Endothelial cell of umbilical vein (primary cell): ENCODE measurements at regions of chr5 and their contacts with region 1.

Region 1: GRCh38 chr5:59673438-59674058 is 220.0 kb downstream of the PDE4D start:
- DNase-seq: peak; percentile 66
- H3K4me3 ChIP-seq: no peak overlapping the region
- H3K27ac ChIP-seq: no peak overlapping the region
- H3K4me1 ChIP-seq: no peaks in the 10 kb centered on the region
- H3K27me3 ChIP-seq: no peaks in the 10 kb centered on the region
- CTCF ChIP-seq: peak; percentile 38 to 46
- POLR2A ChIP-seq: no peak

Region 2: GRCh38 chr5:59380350-59380951 is 293.1 kb before region 1 on chr5:
- CTCF ChIA-PET with region 1: interaction called, 16 read pairs
- POLR2A ChIA-PET with region 1: no interaction called
- dilution Hi-C with region 1: no loop called
- intact Hi-C with region 1: no loop called
- DNase-seq: peak; percentile 71
- H3K4me3 ChIP-seq: no peak overlapping the region
- H3K27ac ChIP-seq: no peak overlapping the region
- H3K4me1 ChIP-seq: no peaks in the 10 kb centered on the region
- H3K27me3 ChIP-seq: no peaks in the 10 kb centered on the region
- CTCF ChIP-seq: peak; percentile 20 to 26
- POLR2A ChIP-seq: no peak

Region 3: DNA sequence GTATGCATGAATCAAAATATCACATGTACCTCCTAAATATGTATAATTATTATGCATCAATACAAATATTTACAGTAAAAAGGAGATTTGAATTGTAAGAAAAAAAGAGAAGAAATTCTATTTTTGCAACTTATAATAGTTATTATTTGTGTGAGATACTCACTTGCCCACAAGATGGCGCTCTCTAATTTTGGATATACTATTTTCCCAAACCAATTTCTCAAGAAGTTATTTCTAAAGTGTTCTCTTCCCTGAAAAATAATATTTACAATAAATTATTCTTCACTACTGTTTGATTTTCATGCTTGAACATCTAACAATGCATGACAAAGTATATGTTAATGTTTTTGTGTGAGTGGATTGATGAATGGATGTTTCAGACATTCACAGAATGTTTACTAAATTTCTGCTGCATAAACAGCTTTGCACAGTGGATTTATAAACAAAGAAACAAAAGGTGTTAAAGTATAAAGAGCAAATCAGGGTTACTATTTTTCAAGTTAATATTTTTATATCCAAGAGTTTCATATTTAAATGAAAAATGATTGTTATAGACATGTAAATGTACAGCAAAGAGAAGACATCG is 283.4 kb before region 1 on chr5:
- CTCF ChIA-PET with region 1: interaction called, 53 read pairs
- POLR2A ChIA-PET with region 1: no interaction called
- dilution Hi-C with region 1: no loop called
- intact Hi-C with region 1: loop called (anchors 1 kb)
- DNase-seq: peak; percentile 40
- H3K4me3 ChIP-seq: no peak overlapping the region
- H3K27ac ChIP-seq: no peak overlapping the region
- H3K4me1 ChIP-seq: no peaks in the 10 kb centered on the region
- H3K27me3 ChIP-seq: no peaks in the 10 kb centered on the region
- CTCF ChIP-seq: peak; percentile 26 to 33
- POLR2A ChIP-seq: no peak

Region 4: GRCh38 chr5:59525959-59526358 is 147.6 kb before region 1 on chr5:
- CTCF ChIA-PET with region 1: interaction called, 10 read pairs
- POLR2A ChIA-PET with region 1: interaction called, 3 read pairs
- dilution Hi-C with region 1: no loop called
- intact Hi-C with region 1: no loop called
- DNase-seq: peak; percentile 63
- H3K4me3 ChIP-seq: no peak overlapping the region
- H3K27ac ChIP-seq: peak overlapping the region; percentile 88
- H3K4me1 ChIP-seq: peaks cover 33% of the 10 kb centered on the region
- H3K27me3 ChIP-seq: no peaks in the 10 kb centered on the region
- CTCF ChIP-seq: peak in 1 of 2 donors; percentile 7
- POLR2A ChIP-seq: no peak

Region 5: DNA sequence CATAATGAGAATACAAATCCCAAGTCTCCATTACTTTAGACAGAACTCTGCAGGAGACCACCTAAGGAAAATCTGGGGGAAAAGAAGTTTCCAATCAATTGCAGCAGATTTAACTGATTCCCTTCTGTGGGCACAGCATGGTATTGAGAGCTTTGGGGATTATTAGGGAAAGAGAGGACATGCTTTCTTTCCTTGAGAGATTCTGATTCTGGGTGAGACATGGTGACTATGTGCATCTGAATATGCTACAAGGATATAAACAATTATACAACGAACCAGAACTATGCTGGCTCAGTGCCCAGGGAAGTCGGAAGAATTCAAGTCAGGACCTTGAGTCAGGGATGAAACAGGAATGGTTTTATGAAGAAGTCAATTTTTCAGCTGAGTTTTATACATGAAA is 36.3 kb after region 1 on chr5:
- CTCF ChIA-PET with region 1: interaction called, 12 read pairs
- POLR2A ChIA-PET with region 1: no interaction called
- dilution Hi-C with region 1: no loop called
- intact Hi-C with region 1: no loop called
- DNase-seq: peak; percentile 81
- H3K4me3 ChIP-seq: no peak overlapping the region
- H3K27ac ChIP-seq: no peak overlapping the region
- H3K4me1 ChIP-seq: peaks cover 6% of the 10 kb centered on the region
- H3K27me3 ChIP-seq: no peaks in the 10 kb centered on the region
- CTCF ChIP-seq: no peak
- POLR2A ChIP-seq: no peak

Region 6: DNA sequence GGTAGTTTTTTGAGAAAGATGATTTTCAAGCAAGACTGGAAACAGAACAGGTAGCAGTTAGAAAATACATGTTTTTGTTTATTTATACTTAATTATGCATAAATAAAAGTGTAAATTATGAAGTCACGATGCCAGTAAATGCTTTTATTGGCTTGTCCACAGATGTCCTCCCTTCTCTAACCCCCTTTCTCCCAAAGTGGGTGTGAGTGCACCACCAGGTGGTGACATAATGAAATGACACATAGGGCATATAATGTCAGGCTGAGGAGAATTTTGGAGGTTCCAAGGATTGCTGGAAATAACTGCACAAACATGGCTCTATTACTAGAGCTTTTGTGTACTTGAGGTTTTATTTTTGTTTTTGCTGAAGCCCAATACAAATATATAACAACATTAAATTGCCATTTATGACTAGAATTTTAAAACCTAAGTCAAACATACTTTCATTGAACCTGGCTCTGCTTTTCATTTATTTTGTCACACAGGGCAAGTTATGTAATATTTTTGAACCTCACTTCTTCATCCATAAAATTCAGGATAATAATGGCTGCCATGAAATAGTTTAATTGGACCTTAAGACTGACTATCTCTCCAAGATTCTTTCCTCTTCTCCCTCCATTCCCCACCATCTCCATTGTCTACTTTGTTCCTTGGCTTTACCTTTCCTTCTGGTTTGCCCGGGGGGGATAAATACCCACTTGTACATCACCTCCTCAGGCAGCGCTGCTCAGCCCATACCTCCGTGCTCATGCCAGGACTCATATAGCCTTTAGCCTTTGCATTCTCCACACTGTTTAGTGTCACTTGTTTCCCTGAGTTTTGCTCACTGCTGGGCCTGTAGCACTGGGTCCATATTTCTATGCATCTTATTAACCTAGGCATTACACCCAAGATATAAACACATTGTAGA is 51.2 kb after region 1 on chr5:
- CTCF ChIA-PET with region 1: interaction called, 9 read pairs
- POLR2A ChIA-PET with region 1: no interaction called
- dilution Hi-C with region 1: no loop called
- intact Hi-C with region 1: loop called (anchors 2 kb)
- DNase-seq: peak; percentile 39
- H3K4me3 ChIP-seq: no peak overlapping the region
- H3K27ac ChIP-seq: no peak overlapping the region
- H3K4me1 ChIP-seq: peaks cover 17% of the 10 kb centered on the region
- H3K27me3 ChIP-seq: no peaks in the 10 kb centered on the region
- CTCF ChIP-seq: peak; percentile 36 to 66
- POLR2A ChIP-seq: no peak

Region 7: GRCh38 chr5:59790399-59791125 is 117.0 kb after region 1 on chr5:
- CTCF ChIA-PET with region 1: interaction called, 12 read pairs
- POLR2A ChIA-PET with region 1: no interaction called
- dilution Hi-C with region 1: no loop called
- intact Hi-C with region 1: no loop called
- DNase-seq: peak; percentile 92
- H3K4me3 ChIP-seq: peak overlapping the region in 2 of 3 experiments; percentile 6 to 44
- H3K27ac ChIP-seq: peak overlapping the region; percentile 94
- H3K4me1 ChIP-seq: peaks cover 34% of the 10 kb centered on the region
- H3K27me3 ChIP-seq: no peaks in the 10 kb centered on the region
- CTCF ChIP-seq: no peak
- POLR2A ChIP-seq: peak; percentile 76